ENCODE measurements at regions of chr19 and their contacts with region 1.

Region 1: DNA sequence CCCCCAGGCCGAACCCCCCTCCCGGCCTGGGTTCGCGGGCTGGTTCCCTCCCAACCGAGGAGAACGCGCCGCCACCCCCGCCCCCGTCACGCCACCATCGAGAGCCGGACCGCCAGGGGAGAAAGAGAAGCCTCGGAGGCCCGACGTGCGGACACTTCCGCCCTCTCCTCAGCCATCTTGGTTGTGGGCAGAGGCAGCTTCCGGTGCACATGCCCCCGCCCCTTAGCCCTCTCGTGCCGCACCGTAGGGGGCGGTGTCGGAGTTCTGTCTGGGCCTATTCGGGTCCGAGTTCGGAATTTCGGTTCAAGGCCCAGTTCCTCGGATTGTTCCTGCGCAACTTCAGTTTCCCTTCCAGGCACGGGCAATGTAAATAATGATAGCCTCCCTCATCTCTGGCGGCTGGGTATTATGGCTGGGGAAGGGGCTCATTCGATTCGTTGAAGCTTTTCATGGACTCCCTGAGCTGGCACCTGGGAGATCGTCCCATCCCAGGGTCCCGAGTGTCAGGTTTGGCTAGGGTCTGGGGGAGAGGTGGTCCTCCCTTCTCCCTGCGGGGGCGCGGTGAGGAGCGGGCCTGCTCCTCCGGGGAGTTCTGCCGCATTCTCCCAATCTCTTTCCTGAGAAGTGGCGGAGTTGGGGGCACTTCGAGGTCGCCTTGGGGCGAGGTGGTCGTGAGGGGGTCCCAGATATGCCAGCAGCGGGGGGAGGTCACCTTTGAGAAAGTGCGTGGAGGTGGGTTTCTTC is at the starts of genes IER2 and STX10:
- DNase-seq: peak; percentile 94 to 98
- ATAC-seq: peak; percentile 63 to 82 (median 78)
- H3K4me3 ChIP-seq: peak within 1 kb of the TSS; percentile 64 to 100 (median 92)
- H3K27ac ChIP-seq: peak within 1 kb of the TSS; percentile 91 to 100 (median 98)
- H3K4me1 ChIP-seq: peaks cover 0 to 33% (median 24%) of the 10 kb centered on the region in 9 donors
- H3K27me3 ChIP-seq: no peaks in the 10 kb centered on the region
- CTCF ChIP-seq: peak; percentile 31 to 80 (median 67)
- total RNA-seq, gene IER2: 19.2 to 54.6 (median 36.0) TPM
- total RNA-seq, gene STX10: 18.7 to 50.4 (median 25.4) TPM

Region 2: DNA sequence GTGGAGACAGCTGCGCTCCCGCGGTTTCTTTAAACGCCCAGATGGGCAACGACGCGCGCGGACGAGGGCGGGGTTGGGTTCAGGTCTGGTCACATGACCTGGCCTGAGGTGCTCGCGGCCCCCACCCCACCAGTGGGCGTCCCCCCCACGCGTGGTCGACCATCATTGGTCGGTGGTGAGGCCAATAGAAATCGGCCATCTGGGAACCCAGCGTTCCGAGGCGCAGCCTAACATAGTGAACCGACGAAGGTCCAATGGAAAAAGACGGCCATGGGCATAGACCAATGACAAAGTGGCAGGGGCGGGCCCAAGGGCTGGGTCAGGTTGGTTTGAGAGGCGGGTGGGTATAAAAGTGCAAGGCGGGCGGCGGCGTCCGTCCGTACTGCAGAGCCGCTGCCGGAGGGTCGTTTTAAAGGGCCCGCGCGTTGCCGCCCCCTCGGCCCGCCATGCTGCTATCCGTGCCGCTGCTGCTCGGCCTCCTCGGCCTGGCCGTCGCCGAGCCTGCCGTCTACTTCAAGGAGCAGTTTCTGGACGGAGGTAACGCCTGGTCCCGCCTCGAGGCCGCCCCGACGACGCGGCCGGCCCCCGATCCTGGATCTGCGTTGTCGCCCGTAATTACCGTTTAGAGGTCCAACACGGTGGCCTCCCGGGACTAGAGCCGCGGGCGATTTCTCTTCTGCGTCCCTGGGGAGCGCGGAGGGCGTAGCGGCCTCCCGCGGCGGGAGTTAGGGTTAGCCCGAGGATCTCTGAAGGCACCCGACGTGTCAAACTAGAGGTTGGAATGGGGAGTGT is 211.9 kb before region 1 on chr19 and contains the start of gene CALR:
- intact Hi-C with region 1: no loop called
- DNase-seq: peak; percentile 98 to 100
- ATAC-seq: peak; percentile 91 to 96 (median 94)
- H3K4me3 ChIP-seq: peak within 1 kb of the TSS; percentile 68 to 100 (median 99)
- H3K27ac ChIP-seq: peak within 1 kb of the TSS; percentile 76 to 98 (median 96)
- H3K4me1 ChIP-seq: peaks cover 4 to 63% (median 38%) of the 10 kb centered on the region in 9 donors
- H3K27me3 ChIP-seq: no peaks in the 10 kb centered on the region
- CTCF ChIP-seq: peak in 6 of 9 donors; percentile 8 to 36 (median 20)
- total RNA-seq, gene CALR: 265 to 683 (median 348) TPM

Region 3: DNA sequence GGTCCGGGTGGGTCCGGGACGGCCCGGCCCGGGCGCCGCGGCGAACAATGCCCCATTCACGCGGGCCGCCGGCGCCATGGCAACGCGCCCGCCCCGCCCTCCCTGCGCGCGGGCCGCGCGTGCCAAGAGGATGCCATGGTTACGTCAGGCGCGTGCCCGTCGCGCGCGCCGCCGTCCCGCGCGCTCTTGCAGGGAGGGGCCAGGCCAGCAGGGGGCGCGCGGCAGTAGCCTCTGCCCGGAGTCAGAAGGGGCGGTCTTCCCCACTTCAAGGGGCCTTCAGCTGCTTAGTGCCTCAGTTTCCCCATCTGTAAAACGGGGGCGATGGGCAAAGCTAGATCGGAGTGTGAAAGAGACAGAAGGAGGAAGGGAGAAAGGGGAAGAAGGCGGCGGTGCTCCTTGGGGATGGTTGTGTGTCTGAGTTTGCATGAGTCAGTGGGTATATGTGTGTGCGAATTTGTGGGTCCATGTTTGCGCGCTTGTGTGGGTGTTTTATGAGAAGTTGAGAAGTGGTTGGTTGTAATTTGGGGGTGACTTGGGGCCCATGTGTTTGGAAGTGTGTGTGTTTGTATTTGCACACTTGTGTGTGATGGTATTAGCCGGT is 166.7 kb before region 1 on chr19:
- intact Hi-C with region 1: loop called in 1 of 10 experiments (anchors 2 kb)
- DNase-seq: peak; percentile 70 to 85
- ATAC-seq: peak; percentile 73 to 89 (median 82)
- H3K4me3 ChIP-seq: peak overlapping the region in 9 of 10 donors; percentile 17 to 47 (median 38)
- H3K27ac ChIP-seq: peak overlapping the region in 3 of 10 donors; percentile 0 to 44 (median 31)
- H3K4me1 ChIP-seq: peaks cover 3 to 29% (median 24%) of the 10 kb centered on the region in 9 donors
- H3K27me3 ChIP-seq: no peaks in the 10 kb centered on the region
- CTCF ChIP-seq: peak; percentile 91 to 99 (median 97)

Region 4: DNA sequence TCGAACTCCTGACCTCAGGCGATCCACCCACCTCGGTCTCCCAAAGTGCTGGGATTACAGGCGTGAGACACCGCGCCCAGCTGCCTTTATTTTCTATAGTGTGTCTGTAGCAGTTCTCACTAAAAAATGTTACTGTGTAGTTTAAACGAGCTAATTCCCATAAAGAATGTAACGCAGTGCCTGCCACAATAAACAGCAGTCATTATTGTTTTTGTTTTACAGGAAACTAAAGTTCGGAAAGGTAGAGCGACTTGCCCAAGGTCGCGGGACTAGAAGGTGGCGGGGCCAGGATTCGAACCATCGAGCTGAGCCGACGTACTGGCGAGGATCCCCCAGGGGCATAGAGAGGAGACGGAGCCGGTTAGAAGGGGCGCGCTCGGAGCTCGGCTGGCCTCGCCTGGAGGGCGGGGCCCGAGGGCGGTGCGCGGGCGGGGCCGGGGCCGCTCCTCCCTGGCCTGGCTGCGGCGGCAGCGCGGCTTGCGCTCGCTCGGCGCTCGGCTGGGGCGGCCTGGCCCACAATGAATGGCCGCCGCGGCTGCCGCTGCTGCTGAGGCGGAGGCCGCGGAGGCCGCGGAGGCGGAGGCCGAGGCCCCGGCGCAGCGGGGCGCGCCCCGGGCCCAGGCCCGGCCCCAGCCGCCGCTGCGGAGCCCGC is 32.5 kb before region 1 on chr19 and contains the start of gene NACC1:
- intact Hi-C with region 1: loop called in 5 of 10 experiments (anchors 1 to 5 kb)
- DNase-seq: peak; percentile 89 to 90
- ATAC-seq: peak; percentile 93 to 97 (median 96)
- H3K4me3 ChIP-seq: peak within 1 kb of the TSS; percentile 89 to 99 (median 97)
- H3K27ac ChIP-seq: peak within 1 kb of the TSS in 9 of 10 donors; percentile 65 to 91 (median 77)
- H3K4me1 ChIP-seq: peaks cover 12 to 54% (median 44%) of the 10 kb centered on the region in 9 donors
- H3K27me3 ChIP-seq: no peaks in the 10 kb centered on the region
- CTCF ChIP-seq: no peak
- total RNA-seq, gene NACC1: 31.1 to 58.0 (median 35.1) TPM

Region 5: DNA sequence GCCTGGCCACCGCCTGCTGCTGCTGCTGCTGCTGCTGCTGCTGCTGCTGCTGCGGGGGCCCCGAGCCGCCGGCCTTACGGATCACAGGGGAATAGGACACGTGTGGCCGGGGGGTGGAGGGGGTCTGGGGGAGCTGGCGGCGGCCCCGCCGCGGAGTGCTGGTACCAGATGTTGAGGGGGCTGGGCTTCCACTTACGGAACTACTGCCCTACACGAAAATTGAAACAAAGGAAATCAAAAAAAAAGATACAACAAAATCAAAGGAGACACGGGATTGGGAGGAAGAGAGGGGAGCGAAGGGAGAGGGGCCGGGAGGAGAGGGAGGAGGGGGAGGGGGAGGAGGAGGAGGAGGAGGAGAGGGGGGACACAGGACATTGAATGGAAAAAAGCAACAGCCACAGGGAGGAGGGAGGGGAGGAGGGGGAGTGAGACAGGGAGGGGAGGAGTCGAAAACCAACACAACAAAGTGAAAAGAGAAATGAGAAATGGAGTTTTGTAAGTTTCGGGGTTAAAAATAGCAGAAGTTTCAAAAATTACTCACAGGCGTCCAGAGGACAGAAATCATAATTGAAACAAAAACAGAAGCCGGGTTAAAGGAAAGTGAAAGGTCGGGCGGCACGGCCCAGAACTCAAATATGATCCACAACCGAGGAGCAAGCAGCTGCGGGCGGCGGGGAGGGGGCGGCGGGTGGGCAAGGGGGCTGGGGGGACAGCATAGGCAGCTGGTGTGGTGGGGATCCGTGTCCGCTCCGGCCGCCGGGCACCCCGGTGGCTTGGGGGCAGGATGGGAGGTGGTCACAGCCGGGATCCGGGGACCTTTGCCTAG is 57.7 kb after region 1 on chr19:
- intact Hi-C with region 1: loop called in 2 of 10 experiments (anchors 5 kb)
- DNase-seq: peak; percentile 56 to 80
- ATAC-seq: peak; percentile 6 to 67 (median 46)
- H3K4me3 ChIP-seq: peak overlapping the region in 9 of 10 donors; percentile 30 to 65 (median 54)
- H3K27ac ChIP-seq: peak overlapping the region; percentile 46 to 95 (median 85)
- H3K4me1 ChIP-seq: peaks cover 0 to 8% (median 0%) of the 10 kb centered on the region in 9 donors
- H3K27me3 ChIP-seq: peaks cover 0 to 11% (median 0%) of the 10 kb centered on the region in 7 donors
- CTCF ChIP-seq: no peak

Region 6: GRCh38 chr19:13846557-13847406 is 696.4 kb after region 1 on chr19:
- intact Hi-C with region 1: loop called in 4 of 10 experiments (anchors 5 to 10 kb)
- DNase-seq: peak; percentile 89 to 96
- ATAC-seq: peak; percentile 39 to 77 (median 74)
- H3K4me3 ChIP-seq: peak overlapping the region in 9 of 10 donors; percentile 37 to 64 (median 58)
- H3K27ac ChIP-seq: peak overlapping the region; percentile 92 to 100 (median 99)
- H3K4me1 ChIP-seq: peaks cover 33 to 80% (median 68%) of the 10 kb centered on the region in 9 donors
- H3K27me3 ChIP-seq: no peaks in the 10 kb centered on the region
- CTCF ChIP-seq: no peak